ENCODE measurements at regions of chr3 and their contacts with region 1.

Region 1: DNA sequence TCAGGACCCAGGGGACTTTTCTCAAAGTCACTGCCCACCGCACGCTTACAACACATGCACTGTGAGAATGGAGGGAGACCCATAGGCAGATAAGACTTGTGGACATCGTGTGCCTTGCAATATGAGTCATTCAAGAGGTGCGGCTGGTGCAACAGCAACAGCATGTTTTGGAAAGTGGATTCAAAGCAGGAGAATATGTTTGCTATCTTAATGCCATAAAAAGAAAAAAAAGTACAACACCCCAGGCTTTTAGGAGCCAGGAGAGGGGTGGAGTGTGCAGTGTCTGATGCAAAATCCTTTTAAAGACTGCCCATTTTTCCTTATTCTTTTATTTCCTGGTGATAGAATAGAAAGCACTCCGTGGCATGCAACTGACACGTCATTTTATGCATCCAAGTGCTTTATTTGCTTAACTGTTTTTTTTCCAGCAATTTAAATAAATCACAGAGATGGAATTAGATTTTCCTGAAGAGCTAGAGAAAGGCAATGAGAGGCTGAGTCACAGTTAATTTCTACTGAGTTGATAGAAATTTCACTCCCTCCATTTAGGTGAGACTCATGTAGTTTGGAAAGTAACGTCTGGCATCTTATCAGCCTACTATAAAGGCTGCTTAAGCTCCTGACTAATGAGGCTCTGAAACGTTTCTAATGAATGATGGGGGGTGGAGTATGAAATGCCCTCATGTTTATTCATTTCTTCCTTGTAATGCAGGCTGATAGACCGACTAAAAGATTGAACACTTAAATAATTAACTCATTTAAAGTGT is 96.4 kb downstream of the NSUN3 start:
- DNase-seq: peak; percentile 65
- ATAC-seq: peak; percentile 74
- H3K4me3 ChIP-seq: peak overlapping the region; percentile 51
- H3K27ac ChIP-seq: peak overlapping the region; percentile 14
- H3K4me1 ChIP-seq: peaks cover 18% of the 10 kb centered on the region
- H3K27me3 ChIP-seq: no peaks in the 10 kb centered on the region
- CTCF ChIP-seq: no peak

Region 2: GRCh38 chr3:94015025-94015424 is 144.2 kb before region 1 on chr3:
- CTCF ChIA-PET with region 1: no interaction called
- POLR2A ChIA-PET with region 1: no interaction called
- intact Hi-C with region 1: no loop called
- DNase-seq: no peak
- ATAC-seq: no peak
- H3K4me3 ChIP-seq: no peak overlapping the region
- H3K27ac ChIP-seq: no peak overlapping the region
- H3K4me1 ChIP-seq: no peaks in the 10 kb centered on the region
- H3K27me3 ChIP-seq: no peaks in the 10 kb centered on the region
- CTCF ChIP-seq: no peak

Region 3: DNA sequence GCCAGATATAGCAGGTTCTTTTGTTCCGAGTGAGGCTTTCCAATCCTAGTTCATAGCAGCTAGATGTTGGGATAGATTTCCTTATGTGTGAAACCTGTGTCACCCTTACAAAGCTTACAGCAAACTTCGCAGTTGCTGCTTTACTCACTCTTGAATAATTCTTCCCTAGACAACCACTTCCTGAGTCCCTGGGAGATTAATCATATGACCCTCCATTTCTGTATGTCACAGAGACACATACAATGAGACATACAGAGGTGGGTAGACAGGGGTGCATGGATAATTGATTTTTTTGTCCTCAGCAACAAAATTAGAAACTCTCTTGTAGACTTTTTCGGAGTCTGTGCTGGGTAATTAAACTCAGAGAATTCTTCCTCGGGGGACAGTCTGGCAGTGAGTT is 66.8 kb after region 1 on chr3:
- CTCF ChIA-PET with region 1: no interaction called
- POLR2A ChIA-PET with region 1: no interaction called
- intact Hi-C with region 1: loop called (anchors 5 kb)
- DNase-seq: peak; percentile 84
- ATAC-seq: peak; percentile 94
- H3K4me3 ChIP-seq: no peak overlapping the region
- H3K27ac ChIP-seq: peak overlapping the region; percentile 61
- H3K4me1 ChIP-seq: peaks cover 18% of the 10 kb centered on the region
- H3K27me3 ChIP-seq: no peaks in the 10 kb centered on the region
- CTCF ChIP-seq: no peak